ENCODE measurements at regions of chr2 and their contacts with region 1.

Region 1: DNA sequence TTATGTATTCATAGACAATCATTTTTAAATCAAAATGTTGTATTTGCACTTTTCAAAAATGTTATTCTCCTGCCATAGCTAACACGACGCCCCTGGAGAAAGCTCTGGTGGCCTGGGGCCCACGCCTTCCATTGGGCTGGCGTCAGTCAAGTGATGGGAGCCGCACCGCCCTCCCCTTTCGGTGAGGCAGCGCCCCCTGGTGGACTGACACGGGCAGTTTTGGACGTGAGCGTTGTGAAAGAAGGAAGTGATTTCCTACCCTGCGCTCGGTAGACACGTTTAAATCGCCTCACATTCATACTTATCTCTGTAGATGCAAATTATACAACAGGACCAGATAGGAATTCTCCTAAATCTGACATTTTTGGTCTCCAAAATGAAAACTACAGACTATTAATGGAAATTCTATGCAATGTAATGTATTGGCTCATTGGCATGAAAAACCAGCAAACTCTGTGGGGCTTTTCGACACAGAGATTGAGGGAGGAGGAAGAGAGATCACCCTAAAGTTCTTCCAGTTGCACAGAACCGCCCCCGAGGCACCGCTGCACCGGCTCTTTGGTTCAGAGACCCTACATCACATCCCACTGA is 326.2 kb upstream of the SOX11 start:
- DNase-seq: peak; percentile 79
- H3K4me3 ChIP-seq: no peak overlapping the region
- H3K27ac ChIP-seq: no peak overlapping the region
- H3K4me1 ChIP-seq: peaks cover 0 to 10% (median 0%) of the 10 kb centered on the region in 4 donors
- H3K27me3 ChIP-seq: no peaks in the 10 kb centered on the region
- CTCF ChIP-seq: peak; percentile 51 to 82 (median 63)
- EP300 ChIP-seq: no peak
- POLR2A ChIP-seq: no peak

Region 2: DNA sequence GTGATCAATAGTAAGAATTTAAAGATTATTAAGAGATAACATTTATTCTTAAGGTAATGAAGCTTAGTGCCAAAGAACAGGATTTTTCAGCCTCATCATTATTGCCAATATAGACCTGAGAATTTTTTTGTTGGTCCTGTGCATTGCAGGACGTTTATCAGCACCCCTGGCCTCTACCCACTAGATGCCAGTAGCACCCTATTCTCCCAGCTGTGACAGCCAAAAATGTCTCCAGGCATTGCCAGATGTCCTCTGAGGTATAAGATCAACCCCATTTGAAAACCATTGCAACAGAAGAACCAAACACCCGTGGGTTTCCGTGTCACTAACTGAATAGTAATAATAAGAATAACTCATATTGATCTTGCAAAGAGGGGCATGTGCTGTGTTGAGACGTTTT is 373.7 kb before region 1 on chr2:
- intact Hi-C with region 1: loop called (anchors 10 kb)
- DNase-seq: no peak
- H3K4me3 ChIP-seq: no peak overlapping the region
- H3K27ac ChIP-seq: no peak overlapping the region
- H3K4me1 ChIP-seq: no peaks in the 10 kb centered on the region
- H3K27me3 ChIP-seq: no peaks in the 10 kb centered on the region
- CTCF ChIP-seq: peak in 1 of 4 experiments; percentile 10
- EP300 ChIP-seq: no peak
- POLR2A ChIP-seq: no peak

Region 3: DNA sequence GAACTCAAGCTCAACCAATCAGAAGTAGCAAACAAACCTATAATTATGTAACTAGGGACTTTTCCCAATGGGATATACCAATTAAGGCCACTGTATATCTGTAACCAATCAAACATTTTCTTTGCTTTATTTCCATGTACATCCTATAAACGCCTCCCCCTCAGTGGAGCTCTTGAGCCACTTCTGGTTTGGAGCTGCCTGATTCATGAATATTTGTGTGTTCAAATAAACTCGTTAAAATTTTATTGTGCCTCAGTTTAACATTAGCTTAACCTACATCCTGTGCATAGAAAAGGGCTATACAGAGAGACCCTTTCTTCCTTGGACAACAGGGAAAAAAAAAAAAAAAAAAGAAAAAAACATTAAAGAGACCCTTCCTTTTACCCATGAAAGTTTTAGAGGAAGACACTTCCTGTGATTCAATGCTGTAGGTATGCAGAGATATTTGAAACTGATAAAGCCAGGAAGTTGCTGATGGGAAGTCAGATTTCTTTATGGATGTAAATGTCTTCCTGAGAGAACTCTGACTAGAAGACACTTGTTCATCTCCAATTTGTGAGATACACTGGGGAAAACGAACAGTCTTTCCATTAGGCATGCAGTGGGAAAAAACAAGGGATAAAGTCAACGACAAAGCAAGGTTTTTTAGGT is 288.4 kb before region 1 on chr2:
- intact Hi-C with region 1: loop called (anchors 10 kb)
- DNase-seq: no peak
- H3K4me3 ChIP-seq: no peak overlapping the region
- H3K27ac ChIP-seq: no peak overlapping the region
- H3K4me1 ChIP-seq: no peaks in the 10 kb centered on the region
- H3K27me3 ChIP-seq: no peaks in the 10 kb centered on the region
- CTCF ChIP-seq: no peak
- EP300 ChIP-seq: no peak
- POLR2A ChIP-seq: no peak

Region 4: GRCh38 chr2:5391362-5391761 is 25.4 kb after region 1 on chr2:
- intact Hi-C with region 1: no loop called
- DNase-seq: no peak
- H3K4me3 ChIP-seq: no peak overlapping the region
- H3K27ac ChIP-seq: no peak overlapping the region
- H3K4me1 ChIP-seq: no peaks in the 10 kb centered on the region
- H3K27me3 ChIP-seq: no peaks in the 10 kb centered on the region
- CTCF ChIP-seq: no peak
- EP300 ChIP-seq: no peak
- POLR2A ChIP-seq: no peak

Region 5: DNA sequence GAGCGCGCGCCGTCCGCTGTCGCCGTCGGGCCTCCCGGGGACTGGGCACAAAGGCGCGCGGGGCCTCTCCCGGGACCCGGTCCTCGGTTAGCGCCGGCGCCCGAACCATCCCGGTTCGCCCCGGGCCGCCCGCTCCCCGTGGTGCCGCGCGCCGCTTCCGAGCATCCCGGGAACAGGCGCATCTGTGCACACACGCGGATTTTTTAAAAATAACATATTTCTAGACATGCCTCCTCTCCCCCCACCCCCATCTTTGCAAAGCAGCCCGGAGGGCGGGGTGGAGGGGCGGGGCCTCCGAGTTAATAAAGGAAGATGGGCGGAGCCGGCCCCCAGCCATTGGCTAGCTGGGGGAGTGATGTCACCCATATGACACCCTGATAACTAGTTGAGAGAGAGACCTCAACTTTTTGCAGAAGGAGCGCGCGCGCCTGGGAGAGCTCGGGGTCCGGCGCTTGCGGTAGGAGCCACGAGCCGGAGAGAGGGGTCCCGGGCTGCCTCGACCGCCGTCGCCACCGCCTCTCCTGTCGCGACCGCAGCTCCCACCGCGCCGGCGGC is 326.1 kb after region 1 on chr2 and contains the start of gene SOX11:
- intact Hi-C with region 1: loop called (anchors 5 kb)
- DNase-seq: peak; percentile 91
- H3K4me3 ChIP-seq: peak within 1 kb of the TSS; percentile 27 to 52 (median 48)
- H3K27ac ChIP-seq: peak within 1 kb of the TSS; percentile 20 to 84 (median 78)
- H3K4me1 ChIP-seq: peaks cover 0 to 51% (median 35%) of the 10 kb centered on the region in 4 donors
- H3K27me3 ChIP-seq: peaks cover 28 to 82% (median 51%) of the 10 kb centered on the region in 3 donors
- CTCF ChIP-seq: no peak
- EP300 ChIP-seq: no peak
- POLR2A ChIP-seq: no peak
- total RNA-seq, gene SOX11: 2.6 to 3.6 (median 2.9) TPM

Measured in sigmoid colon (tissue), 7 donors.